ENCODE measurements at regions of chr5 and their contacts with region 1.

Region 1: DNA sequence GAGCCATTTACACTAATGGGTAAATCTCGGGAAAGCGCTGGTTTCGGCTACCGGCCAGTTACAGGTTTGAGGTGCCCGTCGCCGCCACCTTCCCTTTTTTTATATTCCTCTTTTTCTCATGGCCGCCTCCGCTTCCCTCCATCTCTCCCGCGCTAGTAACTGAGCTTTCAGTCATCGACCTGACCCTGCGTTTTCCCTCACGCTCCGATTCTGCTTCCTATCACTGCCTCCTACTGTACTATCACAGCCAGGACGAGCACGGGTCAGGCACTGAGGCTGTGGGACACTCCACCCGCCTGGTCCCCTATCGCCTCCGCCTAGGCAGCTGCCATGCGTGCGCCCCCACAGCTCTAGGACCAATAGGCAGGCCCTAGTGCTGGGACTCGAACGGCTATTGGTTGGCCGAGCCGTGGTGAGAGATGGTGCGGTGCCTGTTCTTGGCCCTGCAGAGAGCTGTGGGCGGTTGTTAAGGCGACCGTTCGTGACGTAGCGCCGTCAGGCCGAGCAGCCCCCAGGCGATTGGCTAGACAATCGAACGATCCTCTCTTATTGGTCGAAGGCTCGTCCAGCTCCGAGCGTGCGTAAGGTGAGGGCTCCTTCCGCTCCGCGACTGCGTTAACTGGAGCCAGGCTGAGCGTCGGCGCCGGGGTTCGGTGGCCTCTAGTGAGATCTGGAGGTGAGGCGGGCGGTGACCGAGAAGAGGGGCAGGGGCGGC is at the start of gene HMGCR:
- DNase-seq: peak; percentile 99
- ATAC-seq: peak; percentile 100
- total RNA-seq, gene HMGCR: 9.6 TPM

Region 2: DNA sequence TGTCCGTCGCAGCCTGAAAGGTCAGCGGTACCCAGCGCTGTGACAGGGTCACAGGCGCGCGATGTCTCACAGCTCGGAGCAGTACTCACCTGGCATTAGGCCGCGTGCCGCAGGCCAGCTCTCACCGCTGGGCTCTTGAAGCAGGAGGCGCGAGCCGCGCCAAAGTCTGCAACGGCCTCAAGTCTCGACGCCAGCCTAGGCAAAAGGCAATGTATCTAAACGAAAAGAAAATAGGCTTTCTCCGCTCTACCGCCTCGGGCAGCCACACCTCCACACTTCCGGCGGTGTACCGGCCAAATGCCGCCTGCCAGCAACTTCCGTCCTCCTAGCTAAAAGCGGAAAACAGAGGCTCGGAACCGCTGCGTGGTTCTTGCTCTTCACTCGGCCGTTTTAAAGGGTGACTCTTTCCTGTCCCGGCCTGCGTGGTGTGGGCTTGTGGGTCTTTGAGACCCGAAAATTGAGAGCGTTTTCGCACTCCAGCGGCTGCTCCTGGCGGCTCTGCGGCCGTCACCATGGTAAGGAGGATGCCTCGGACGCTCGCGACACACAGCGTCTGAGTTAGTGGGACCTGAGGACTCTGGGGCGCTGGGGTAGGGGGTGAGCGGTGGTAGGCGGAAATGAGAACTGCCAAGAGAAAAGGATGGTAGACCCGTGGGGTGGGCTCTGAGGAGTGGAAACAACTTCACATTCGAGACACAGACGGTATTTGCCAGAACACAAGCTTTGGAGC is 569.8 kb before region 1 on chr5 and contains the starts of genes GFM2 and NSA2:
- intact Hi-C with region 1: no loop called
- DNase-seq: peak; percentile 95
- ATAC-seq: peak; percentile 99
- total RNA-seq, gene GFM2: 44.6 TPM
- total RNA-seq, gene NSA2: 45.1 TPM

Region 3: DNA sequence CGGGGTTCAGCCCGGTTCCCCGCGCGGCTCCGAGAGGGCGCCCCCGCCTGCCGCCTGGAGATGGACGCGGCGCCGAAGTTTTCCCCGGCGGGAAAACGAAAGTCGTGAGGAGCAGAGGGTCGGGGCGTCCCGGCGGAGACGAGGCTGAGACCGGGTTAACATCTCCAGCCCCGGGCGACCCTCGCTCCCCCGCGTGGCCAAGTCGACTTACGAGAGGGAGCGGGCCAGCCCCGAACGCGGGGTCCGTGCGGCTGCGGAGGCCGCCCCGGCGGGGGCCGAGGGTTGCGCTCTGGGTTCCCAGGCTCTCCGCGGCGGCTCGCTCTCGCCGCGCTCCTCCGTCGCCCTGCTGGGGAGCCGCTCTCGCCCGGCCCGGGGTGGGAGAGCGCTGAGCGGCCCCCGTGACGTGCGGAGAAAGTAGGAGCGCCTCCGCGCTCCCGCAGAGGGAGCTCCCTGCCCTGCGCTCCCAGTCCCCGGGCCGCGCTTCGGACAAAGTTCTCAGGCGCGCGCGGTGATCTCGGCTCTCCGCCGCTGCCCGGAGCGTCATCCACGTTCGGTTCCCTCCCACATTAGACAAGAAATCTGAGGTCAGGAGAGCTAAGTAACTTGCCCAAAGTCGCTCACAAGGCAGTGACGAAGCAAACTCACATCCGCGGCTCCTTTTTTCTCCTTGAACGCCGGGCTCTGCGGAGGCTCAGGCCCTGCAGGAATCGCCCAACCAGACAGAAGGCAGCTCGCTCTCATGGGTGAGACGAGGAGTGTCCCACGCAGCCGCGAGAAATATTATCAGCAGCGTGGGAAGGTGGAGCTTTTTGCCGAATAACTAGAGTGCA is 283.3 kb before region 1 on chr5:
- intact Hi-C with region 1: loop called (anchors 10 kb)
- DNase-seq: peak; percentile 75
- ATAC-seq: peak; percentile 58

Region 4: GRCh38 chr5:75405296-75405695 is 68.5 kb after region 1 on chr5:
- intact Hi-C with region 1: no loop called
- DNase-seq: no peak
- ATAC-seq: no peak

Region 5: GRCh38 chr5:75511435-75512384 is 174.9 kb after region 1 on chr5 and contains the starts of genes CERT1 and POLK:
- intact Hi-C with region 1: loop called (anchors 5 kb)
- DNase-seq: peak; percentile 99
- ATAC-seq: peak; percentile 99
- total RNA-seq, gene CERT1: 26.0 TPM
- total RNA-seq, gene POLK: 20.1 TPM